A549 (cell line): ENCODE measurements at regions of chr3 and their contacts with region 1.

Region 1: DNA sequence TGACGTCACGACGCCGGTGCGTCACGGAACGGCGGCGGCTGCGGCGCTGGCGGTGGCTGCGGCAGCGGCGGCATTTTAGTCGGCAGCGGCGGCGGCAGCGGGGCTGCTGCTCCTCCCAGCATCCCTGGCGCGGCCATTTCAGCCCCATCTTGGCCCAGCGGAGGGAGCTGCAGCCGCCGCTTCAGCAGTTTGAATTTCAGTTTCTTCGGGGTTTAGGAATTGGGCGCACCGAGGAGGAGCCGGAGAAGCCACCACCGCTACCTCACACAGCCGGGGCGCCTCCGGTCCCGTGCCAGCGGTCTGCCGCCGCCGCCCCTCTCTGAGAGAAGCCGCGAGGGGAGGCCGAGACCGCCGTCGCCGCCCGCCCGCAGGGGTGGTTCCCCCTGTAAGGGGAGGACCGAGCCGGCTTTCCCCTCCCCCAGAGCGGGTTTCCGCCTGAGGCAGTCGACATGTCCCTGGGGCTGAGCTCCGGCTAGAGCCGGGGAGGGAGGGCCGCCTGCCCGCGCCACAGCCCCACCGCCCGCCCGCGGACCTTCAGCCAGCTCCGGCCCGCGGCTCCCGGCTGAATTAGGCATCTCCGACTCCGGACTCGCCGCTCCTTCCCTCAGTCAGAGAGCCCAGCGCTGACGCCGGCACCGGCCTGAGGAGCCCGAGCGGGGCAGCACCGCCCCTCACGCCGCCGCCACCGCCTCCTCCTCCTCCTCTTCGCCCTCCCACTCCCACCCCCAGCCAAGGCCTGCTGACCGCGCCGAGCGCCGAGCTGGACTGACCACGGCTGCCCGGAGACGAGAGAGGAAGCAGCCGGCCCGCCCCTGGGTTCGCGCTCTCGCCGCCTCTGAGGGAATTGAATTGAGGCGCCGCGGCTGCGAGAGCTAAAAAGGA is at the start of gene TSC22D2:
- DNase-seq: peak; percentile 81 to 95
- ATAC-seq: peak; percentile 75 to 85
- H3K4me3 ChIP-seq: peak within 1 kb of the TSS; percentile 78
- H3K27ac ChIP-seq: peak within 1 kb of the TSS; percentile 98 to 99
- H3K4me1 ChIP-seq: peaks cover 19% of the 10 kb centered on the region; the same call in 2 of the 3 replicates
- CTCF ChIP-seq: no peak
- EP300 ChIP-seq: no peak
- POLR2A ChIP-seq: peak; percentile 89
- RAD21 ChIP-seq: peak in 1 of 2 experiments; percentile 38; a peak in 3 of 5 replicates
- polyA plus RNA-seq, gene TSC22D2: 13.8 and 13.9 TPM in 2 replicates

Region 2: DNA sequence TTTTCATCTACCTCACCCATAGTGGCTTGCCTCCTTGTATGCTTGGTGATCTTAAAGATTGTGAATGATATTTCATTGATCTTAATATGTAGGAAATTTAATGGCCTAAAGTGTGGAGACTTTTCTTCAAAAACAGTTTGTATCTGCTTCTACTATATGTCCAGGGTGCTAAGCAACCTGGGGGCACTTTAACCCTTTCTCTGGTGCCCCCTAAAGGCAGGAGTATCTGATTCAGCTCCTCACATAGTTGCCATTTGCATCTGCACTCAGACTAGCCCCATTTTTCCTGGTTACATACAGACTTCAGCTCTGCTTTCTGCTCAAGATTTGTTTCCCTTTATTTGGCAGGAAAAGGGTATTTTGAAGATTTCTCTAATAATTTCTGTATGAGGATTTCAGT is 432.5 kb before region 1 on chr3:
- CTCF ChIA-PET with region 1: no interaction called
- POLR2A ChIA-PET with region 1: no interaction called
- DNase-seq: no peak
- ATAC-seq: no peak
- H3K4me3 ChIP-seq: no peak overlapping the region
- H3K27ac ChIP-seq: no peak overlapping the region
- H3K4me1 ChIP-seq: peaks cover 6% of the 10 kb centered on the region; the same call in 1 of the 3 replicates
- CTCF ChIP-seq: no peak
- EP300 ChIP-seq: no peak
- POLR2A ChIP-seq: no peak
- RAD21 ChIP-seq: 0 out of 5 replicates have a peak, but pooled peaks of 1 of the 2 experiments have one; percentile 8

Region 3: GRCh38 chr3:150238998-150239619 is 169.4 kb before region 1 on chr3:
- CTCF ChIA-PET with region 1: interaction called, 75 read pairs
- POLR2A ChIA-PET with region 1: interaction called, 11 read pairs
- DNase-seq: peak; percentile 41 to 68
- ATAC-seq: peak; percentile 77 to 94; a peak in 3 of 6 replicates
- H3K4me3 ChIP-seq: no peak overlapping the region
- H3K27ac ChIP-seq: no peak overlapping the region
- H3K4me1 ChIP-seq: peaks cover 6% of the 10 kb centered on the region; the same call in 1 of the 3 replicates
- CTCF ChIP-seq: peak; percentile 83
- EP300 ChIP-seq: no peak
- POLR2A ChIP-seq: no peak
- RAD21 ChIP-seq: peak; percentile 88 to 93

Region 4: DNA sequence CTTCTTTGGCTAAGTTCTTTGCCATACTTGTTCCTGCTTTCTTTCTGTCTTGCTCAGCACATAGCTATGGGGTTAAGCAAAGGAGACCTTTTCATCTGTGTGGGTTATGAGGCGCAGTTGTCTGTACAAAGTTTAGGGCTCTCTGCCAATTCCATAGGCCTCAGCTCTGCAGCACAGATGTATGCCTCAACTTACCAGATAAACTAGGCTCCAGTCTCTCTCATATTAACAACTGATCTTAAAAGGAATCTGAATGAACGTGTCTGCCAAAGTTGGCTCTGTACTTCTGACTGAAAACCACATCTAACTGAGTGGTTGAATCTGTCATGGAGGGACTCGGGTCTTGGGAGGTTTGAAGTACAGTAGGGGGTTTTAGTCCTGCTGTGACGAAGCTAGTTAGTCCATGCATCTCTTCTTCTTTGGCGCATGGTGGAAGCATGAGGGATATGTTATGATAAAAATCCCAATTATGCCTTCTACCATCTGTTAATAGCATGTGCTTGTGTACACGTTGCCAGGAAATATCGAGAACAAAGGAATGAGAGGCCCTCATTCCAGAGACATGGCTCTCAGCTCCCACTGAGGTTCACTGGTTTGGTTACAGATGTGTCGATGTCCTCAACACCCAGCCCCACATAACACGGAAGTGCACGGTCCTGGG is 114.9 kb before region 1 on chr3:
- CTCF ChIA-PET with region 1: interaction called, 13 read pairs
- POLR2A ChIA-PET with region 1: no interaction called
- DNase-seq: no peak
- ATAC-seq: no peak
- H3K4me3 ChIP-seq: no peak overlapping the region
- H3K27ac ChIP-seq: no peak overlapping the region
- H3K4me1 ChIP-seq: no peaks in the 10 kb centered on the region
- CTCF ChIP-seq: no peak
- EP300 ChIP-seq: no peak
- POLR2A ChIP-seq: no peak
- RAD21 ChIP-seq: no peak

Region 5: GRCh38 chr3:150371741-150372254 is 36.7 kb before region 1 on chr3:
- CTCF ChIA-PET with region 1: interaction called, 5 read pairs
- POLR2A ChIA-PET with region 1: interaction called, 16 read pairs
- DNase-seq: peak; percentile 64 to 97
- ATAC-seq: peak; percentile 69 to 73
- H3K4me3 ChIP-seq: peak overlapping the region; percentile 47
- H3K27ac ChIP-seq: peak overlapping the region; percentile 88 to 90
- H3K4me1 ChIP-seq: peaks cover 59% of the 10 kb centered on the region
- CTCF ChIP-seq: no peak
- EP300 ChIP-seq: peak; percentile 31 to 70; a peak in 2 of 5 replicates
- POLR2A ChIP-seq: no peak
- RAD21 ChIP-seq: peak; percentile 15 to 26; a peak in 2 of 5 replicates

Region 6: GRCh38 chr3:150469031-150469942 is 60.8 kb after region 1 on chr3:
- CTCF ChIA-PET with region 1: interaction called, 10 read pairs
- POLR2A ChIA-PET with region 1: interaction called, 11 read pairs
- DNase-seq: peak; percentile 80 to 88
- ATAC-seq: peak; percentile 95 to 99
- H3K4me3 ChIP-seq: no peak overlapping the region; the same call in 2 of the 3 replicates
- H3K27ac ChIP-seq: peak overlapping the region; percentile 70 to 83
- H3K4me1 ChIP-seq: peaks cover 30% of the 10 kb centered on the region
- CTCF ChIP-seq: no peak
- EP300 ChIP-seq: peak in 1 of 2 experiments; percentile 29; a peak in 2 of 5 replicates
- POLR2A ChIP-seq: no peak
- RAD21 ChIP-seq: no peak

Region 7: DNA sequence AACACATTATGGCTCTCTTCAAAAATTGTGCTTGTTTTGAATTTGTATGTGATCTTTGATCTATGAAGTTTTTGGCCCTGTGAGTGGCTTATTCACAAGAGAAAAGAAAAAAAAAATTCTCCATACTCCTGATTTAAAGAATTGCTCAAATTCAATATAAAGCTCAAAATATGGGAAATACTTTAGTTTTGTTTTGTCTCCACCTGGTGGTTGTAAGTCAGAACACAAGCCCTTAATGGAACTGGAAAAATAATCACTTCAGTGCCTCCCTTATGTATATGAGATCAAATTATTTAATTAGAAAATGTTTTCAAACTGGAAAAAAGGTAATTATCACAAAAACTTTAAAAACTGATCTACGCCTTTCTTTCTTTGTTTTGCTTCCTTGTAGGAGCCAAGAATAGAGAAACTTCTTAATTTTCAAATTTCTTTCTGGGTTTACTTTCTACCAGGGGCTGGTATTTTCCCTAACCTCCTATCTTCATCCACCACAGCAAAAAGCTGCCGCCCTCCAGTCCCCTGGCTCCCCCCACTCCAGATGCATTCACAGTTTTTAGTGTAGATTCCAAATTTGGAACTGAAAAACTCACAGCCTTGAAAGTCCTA is 87.2 kb after region 1 on chr3:
- CTCF ChIA-PET with region 1: interaction called, 72 read pairs
- POLR2A ChIA-PET with region 1: interaction called, 5 read pairs
- DNase-seq: peak; percentile 39 to 48
- ATAC-seq: peak in 1 of 2 experiments; percentile 74; a peak in 3 of 6 replicates
- H3K4me3 ChIP-seq: no peak overlapping the region
- H3K27ac ChIP-seq: peak overlapping the region in 1 of 2 experiments; percentile 22; a peak in 1 of 6 replicates
- H3K4me1 ChIP-seq: peaks cover 18% of the 10 kb centered on the region
- CTCF ChIP-seq: peak; percentile 88
- EP300 ChIP-seq: no peak
- POLR2A ChIP-seq: no peak
- RAD21 ChIP-seq: peak; percentile 90 to 94

Region 8: GRCh38 chr3:150577859-150578258 is 169.4 kb after region 1 on chr3:
- CTCF ChIA-PET with region 1: no interaction called
- POLR2A ChIA-PET with region 1: no interaction called
- DNase-seq: peak in 1 of 2 experiments; percentile 19
- ATAC-seq: peak in 1 of 2 experiments; percentile 42; a peak in 1 of 6 replicates
- H3K4me3 ChIP-seq: no peak overlapping the region
- H3K27ac ChIP-seq: no peak overlapping the region
- H3K4me1 ChIP-seq: no peaks in the 10 kb centered on the region
- CTCF ChIP-seq: no peak; the same call in 2 of the 3 replicates
- EP300 ChIP-seq: no peak
- POLR2A ChIP-seq: no peak
- RAD21 ChIP-seq: no peak

Region 9: GRCh38 chr3:150662410-150663200 is 254.1 kb after region 1 on chr3:
- CTCF ChIA-PET with region 1: no interaction called
- POLR2A ChIA-PET with region 1: no interaction called
- DNase-seq: no peak
- ATAC-seq: no peak
- H3K4me3 ChIP-seq: no peak overlapping the region
- H3K27ac ChIP-seq: no peak overlapping the region
- H3K4me1 ChIP-seq: no peaks in the 10 kb centered on the region
- CTCF ChIP-seq: no peak
- EP300 ChIP-seq: no peak
- POLR2A ChIP-seq: no peak
- RAD21 ChIP-seq: no peak

Region 10: GRCh38 chr3:151318946-151319345 is 910.5 kb after region 1 on chr3:
- CTCF ChIA-PET with region 1: no interaction called
- POLR2A ChIA-PET with region 1: no interaction called
- DNase-seq: no peak
- ATAC-seq: no peak
- H3K4me3 ChIP-seq: no peak overlapping the region
- H3K27ac ChIP-seq: 0 out of 6 replicates have a peak overlapping the region, but pooled peaks of 1 of the 2 experiments have one; percentile 3
- H3K4me1 ChIP-seq: peaks cover 20% of the 10 kb centered on the region; the same call in 2 of the 3 replicates
- CTCF ChIP-seq: no peak
- EP300 ChIP-seq: no peak
- POLR2A ChIP-seq: no peak
- RAD21 ChIP-seq: no peak